Activated B cell treated with CpG ODN at 0.5 μM for 24 hours (primary cell): ENCODE measurements at regions of chr19 and their contacts with region 1.

Region 1: GRCh38 chr19:17859533-17860330 is at the start of gene RPL18A:
- DNase-seq: peak; percentile 85
- ATAC-seq: peak; percentile 91
- H3K4me3 Mint-ChIP-seq: peak within 1 kb of the TSS; percentile 99
- H3K27ac Mint-ChIP-seq: peak within 1 kb of the TSS; percentile 98
- H3K4me1 Mint-ChIP-seq: peaks cover 47% of the 10 kb centered on the region
- H3K27me3 Mint-ChIP-seq: no peaks in the 10 kb centered on the region
- CTCF ChIP-seq: no peak
- total RNA-seq, gene RPL18A: 4,113 and 4,404 TPM in 2 replicates

Region 2: DNA sequence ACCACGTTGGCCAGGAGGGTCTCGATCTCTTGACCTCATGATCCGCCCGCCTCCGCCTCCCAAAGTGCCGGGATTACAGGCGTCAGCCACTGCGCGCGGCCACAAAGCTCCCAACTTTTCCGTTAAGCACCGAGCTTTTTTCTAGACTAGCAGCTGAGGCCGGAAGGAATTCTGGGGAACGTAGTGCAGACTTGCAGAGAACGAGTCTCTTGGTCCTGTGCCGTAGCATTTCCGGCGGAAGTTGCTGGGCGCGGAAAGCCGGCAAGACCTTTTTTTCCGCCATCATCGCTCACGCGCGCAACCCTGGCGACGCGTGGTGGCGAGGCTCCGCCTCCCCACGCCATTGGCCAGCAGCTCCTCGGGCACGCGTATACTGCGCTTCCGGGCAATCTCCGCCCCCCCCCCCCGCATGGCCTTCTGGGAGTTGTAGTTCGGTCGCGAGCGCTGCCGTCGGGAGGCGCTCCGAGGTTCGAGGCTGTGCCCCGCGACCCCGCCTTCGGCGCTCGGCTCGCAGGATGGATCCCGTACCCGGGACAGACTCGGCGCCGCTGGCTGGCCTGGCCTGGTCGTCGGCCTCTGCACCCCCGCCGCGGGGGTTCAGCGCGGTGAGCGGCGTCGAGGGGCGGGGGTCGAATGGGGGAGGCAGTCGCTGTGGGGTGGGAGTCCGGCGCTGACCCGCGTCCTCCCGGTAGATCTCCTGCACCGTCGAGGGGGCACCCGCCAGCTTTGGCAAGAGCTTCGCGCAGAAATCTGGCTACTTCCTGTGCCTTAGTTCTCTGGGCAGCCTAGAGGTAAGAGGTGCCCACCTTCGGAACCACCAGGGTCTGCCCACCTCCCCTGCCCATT is 439.9 kb before region 1 on chr19 and contains the start of gene MVB12A:
- CTCF ChIA-PET with region 1: interaction called, 3 read pairs
- POLR2A ChIA-PET with region 1: interaction called, 12 read pairs
- intact Hi-C with region 1: no loop called
- DNase-seq: peak; percentile 91
- ATAC-seq: peak; percentile 97
- H3K4me3 Mint-ChIP-seq: peak within 1 kb of the TSS; percentile 95
- H3K27ac Mint-ChIP-seq: peak within 1 kb of the TSS; percentile 93
- H3K4me1 Mint-ChIP-seq: peaks cover 16% of the 10 kb centered on the region
- H3K27me3 Mint-ChIP-seq: no peaks in the 10 kb centered on the region
- CTCF ChIP-seq: no peak
- total RNA-seq, gene MVB12A: 22.8 and 23.3 TPM in 2 replicates

Region 3: GRCh38 chr19:17555480-17555928 is 304.2 kb before region 1 on chr19 and contains the start of gene COLGALT1:
- CTCF ChIA-PET with region 1: no interaction called
- POLR2A ChIA-PET with region 1: interaction called, 6 read pairs
- intact Hi-C with region 1: loop called (anchors 10 kb)
- DNase-seq: peak; percentile 94
- ATAC-seq: peak; percentile 93
- H3K4me3 Mint-ChIP-seq: peak within 1 kb of the TSS; percentile 84
- H3K27ac Mint-ChIP-seq: peak within 1 kb of the TSS; percentile 75
- H3K4me1 Mint-ChIP-seq: peaks cover 23% of the 10 kb centered on the region
- H3K27me3 Mint-ChIP-seq: no peaks in the 10 kb centered on the region
- CTCF ChIP-seq: no peak
- total RNA-seq, gene COLGALT1: 69.2 and 80.3 TPM in 2 replicates

Region 4: GRCh38 chr19:17703824-17704463 is 155.8 kb before region 1 on chr19:
- CTCF ChIA-PET with region 1: interaction called, 21 read pairs
- POLR2A ChIA-PET with region 1: interaction called, 5 read pairs
- intact Hi-C with region 1: loop called (anchors 1 kb)
- DNase-seq: peak; percentile 70
- ATAC-seq: peak; percentile 97
- H3K4me3 Mint-ChIP-seq: no peak overlapping the region
- H3K27ac Mint-ChIP-seq: no peak overlapping the region
- H3K4me1 Mint-ChIP-seq: peaks cover 2% of the 10 kb centered on the region
- H3K27me3 Mint-ChIP-seq: peaks cover 8% of the 10 kb centered on the region
- CTCF ChIP-seq: peak; percentile 64

Region 5: GRCh38 chr19:17775245-17775916 is 84.4 kb before region 1 on chr19:
- CTCF ChIA-PET with region 1: interaction called, 7 read pairs
- POLR2A ChIA-PET with region 1: interaction called, 4 read pairs
- intact Hi-C with region 1: loop called (anchors 2 kb)
- DNase-seq: no peak
- ATAC-seq: no peak
- H3K4me3 Mint-ChIP-seq: peak overlapping the region; percentile 82
- H3K27ac Mint-ChIP-seq: peak overlapping the region; percentile 99
- H3K4me1 Mint-ChIP-seq: peaks cover 48% of the 10 kb centered on the region
- H3K27me3 Mint-ChIP-seq: no peaks in the 10 kb centered on the region
- CTCF ChIP-seq: no peak

Region 6: DNA sequence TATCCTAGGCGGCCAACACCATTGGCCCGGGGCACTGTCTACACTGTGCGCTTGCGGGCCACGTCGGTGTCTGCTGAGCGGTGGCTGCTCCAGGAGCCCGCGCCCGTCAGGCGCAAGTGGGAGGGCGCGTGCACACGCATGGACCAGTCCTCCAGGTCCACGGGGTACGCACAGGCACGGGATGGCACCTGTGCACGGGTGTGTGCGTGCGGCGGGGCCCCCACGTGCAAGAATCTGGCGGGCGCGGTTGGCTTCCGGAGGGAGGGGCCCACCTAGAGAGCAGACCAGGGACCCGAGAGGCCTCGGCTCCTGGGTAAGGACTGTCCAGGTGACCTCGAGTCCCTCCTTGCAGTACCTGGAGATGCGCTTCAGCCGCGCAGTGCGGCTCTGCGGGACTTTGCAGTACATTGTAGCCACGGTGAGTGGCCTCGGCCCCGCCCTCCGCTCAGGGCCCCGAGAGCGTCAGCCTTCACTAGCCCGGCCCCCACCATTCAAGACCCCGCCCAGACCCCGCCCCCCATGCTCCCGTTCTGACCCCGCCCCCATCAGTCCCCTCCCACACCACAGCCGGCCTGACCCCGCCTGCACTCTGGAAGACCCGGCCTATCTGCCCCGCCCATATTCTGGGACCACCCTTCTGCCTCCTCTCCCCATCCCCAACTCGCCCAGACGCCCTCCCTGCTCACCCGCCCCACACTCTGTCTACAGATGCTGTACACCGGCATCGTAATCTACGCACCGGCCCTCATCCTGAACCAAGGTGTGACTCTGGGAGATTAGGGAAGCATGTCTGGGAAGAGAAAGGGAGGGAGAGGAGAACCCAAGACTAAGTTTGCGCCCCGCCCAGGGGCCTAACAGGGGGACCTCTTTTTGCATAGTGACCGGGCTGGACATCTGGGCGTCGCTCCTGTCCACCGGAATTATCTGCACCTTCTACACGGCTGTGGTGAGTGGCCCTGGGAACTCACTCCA is 14.3 kb after region 1 on chr19:
- CTCF ChIA-PET with region 1: interaction called, 8 read pairs
- POLR2A ChIA-PET with region 1: interaction called, 36 read pairs
- intact Hi-C with region 1: loop called (anchors 2 kb)
- DNase-seq: peak; percentile 50
- ATAC-seq: peak; percentile 90
- H3K4me3 Mint-ChIP-seq: peak overlapping the region; percentile 59
- H3K27ac Mint-ChIP-seq: no peak overlapping the region
- H3K4me1 Mint-ChIP-seq: peaks cover 21% of the 10 kb centered on the region
- H3K27me3 Mint-ChIP-seq: peaks cover 2% of the 10 kb centered on the region
- CTCF ChIP-seq: no peak

Region 7: GRCh38 chr19:17920527-17920926 is 60.8 kb after region 1 on chr19:
- CTCF ChIA-PET with region 1: no interaction called
- POLR2A ChIA-PET with region 1: no interaction called
- intact Hi-C with region 1: no loop called
- DNase-seq: no peak
- ATAC-seq: no peak
- H3K4me3 Mint-ChIP-seq: no peak overlapping the region
- H3K27ac Mint-ChIP-seq: no peak overlapping the region
- H3K4me1 Mint-ChIP-seq: no peaks in the 10 kb centered on the region
- H3K27me3 Mint-ChIP-seq: no peaks in the 10 kb centered on the region
- CTCF ChIP-seq: no peak

Region 8: GRCh38 chr19:18000935-18001778 is 141.4 kb after region 1 on chr19:
- CTCF ChIA-PET with region 1: interaction called, 10 read pairs
- POLR2A ChIA-PET with region 1: interaction called, 30 read pairs
- intact Hi-C with region 1: loop called (anchors 1 kb)
- DNase-seq: peak; percentile 92
- ATAC-seq: peak; percentile 82
- H3K4me3 Mint-ChIP-seq: peak overlapping the region; percentile 92
- H3K27ac Mint-ChIP-seq: peak overlapping the region; percentile 96
- H3K4me1 Mint-ChIP-seq: peaks cover 37% of the 10 kb centered on the region
- H3K27me3 Mint-ChIP-seq: no peaks in the 10 kb centered on the region
- CTCF ChIP-seq: no peak